Breast epithelium (tissue), 4 donors: ENCODE measurements at regions of chr14 and their contacts with region 1.

Region 1: GRCh38 chr14:94494085-94494484 is 15.2 kb downstream of the SERPINA12 start:
- DNase-seq: peak in 1 of 2 donors; percentile 74
- H3K4me3 ChIP-seq: no peak overlapping the region
- H3K27ac ChIP-seq: no peak overlapping the region
- H3K4me1 ChIP-seq: no peaks in the 10 kb centered on the region
- H3K27me3 ChIP-seq: no peaks in the 10 kb centered on the region
- CTCF ChIP-seq: no peak
- POLR2A ChIP-seq: no peak

Region 2: DNA sequence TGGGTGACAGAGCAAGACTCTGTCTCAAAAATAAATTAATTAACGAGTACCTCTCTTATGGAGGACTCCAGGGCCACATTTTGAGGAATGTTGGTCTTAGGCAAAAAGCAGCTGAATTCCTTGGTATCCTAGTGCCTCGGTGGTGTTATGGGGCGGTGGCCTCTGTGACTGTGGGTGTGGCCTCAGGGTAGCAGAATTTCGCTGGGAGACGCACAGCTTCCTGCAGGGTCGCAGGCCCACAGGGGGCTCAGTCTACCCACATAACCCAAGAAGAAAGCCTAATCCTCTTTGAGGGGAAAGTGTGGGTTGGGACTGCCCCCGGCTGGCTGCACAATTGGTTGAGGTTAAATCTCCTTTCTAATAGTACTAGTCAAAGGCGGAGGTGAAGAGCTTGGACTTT is 56.0 kb after region 1 on chr14:
- intact Hi-C with region 1: loop called (anchors 2 kb)
- DNase-seq: no peak
- H3K4me3 ChIP-seq: no peak overlapping the region
- H3K27ac ChIP-seq: no peak overlapping the region
- H3K4me1 ChIP-seq: no peaks in the 10 kb centered on the region
- H3K27me3 ChIP-seq: no peaks in the 10 kb centered on the region
- CTCF ChIP-seq: no peak
- POLR2A ChIP-seq: no peak